Endothelial cell of umbilical vein (primary cell): ENCODE measurements at regions of chr17 and their contacts with region 1.

Region 1: DNA sequence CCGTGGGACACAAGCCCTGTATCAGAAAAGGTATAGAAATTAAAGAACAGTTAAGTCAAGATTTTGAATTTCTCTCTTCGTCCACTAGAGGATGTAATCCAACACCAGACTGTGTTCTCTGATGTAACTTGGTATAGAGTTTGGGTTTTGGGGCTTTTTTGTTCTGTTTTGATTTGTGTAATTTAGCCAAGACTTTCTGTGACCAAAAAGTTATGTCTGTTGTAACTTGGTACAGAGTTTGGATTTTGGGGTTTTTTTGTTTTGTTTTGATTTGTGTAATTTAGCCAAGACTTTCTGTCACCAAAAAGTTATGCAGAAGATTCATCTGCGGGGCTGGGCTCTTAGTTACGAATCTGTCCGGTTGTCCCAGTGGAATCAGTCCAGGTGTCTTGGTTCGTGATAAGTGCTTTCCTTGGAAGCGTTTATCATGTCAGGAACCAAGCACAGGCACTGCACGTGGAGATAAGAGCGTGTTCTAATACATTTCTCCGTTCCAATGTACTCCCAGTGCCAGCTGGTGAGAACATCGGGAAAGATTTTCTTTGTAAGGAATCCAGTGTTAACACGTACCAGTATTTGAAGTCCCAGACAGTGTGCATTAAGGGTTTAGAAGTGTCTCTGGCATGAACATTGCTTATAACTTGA is 44.1 kb upstream of the SEC14L1 start:
- DNase-seq: peak; percentile 78
- H3K4me3 ChIP-seq: no peak overlapping the region
- H3K27ac ChIP-seq: peak overlapping the region; percentile 86
- H3K4me1 ChIP-seq: peaks cover 50% of the 10 kb centered on the region
- H3K27me3 ChIP-seq: no peaks in the 10 kb centered on the region
- CTCF ChIP-seq: peak; percentile 47 to 58
- POLR2A ChIP-seq: peak; percentile 35

Region 2: DNA sequence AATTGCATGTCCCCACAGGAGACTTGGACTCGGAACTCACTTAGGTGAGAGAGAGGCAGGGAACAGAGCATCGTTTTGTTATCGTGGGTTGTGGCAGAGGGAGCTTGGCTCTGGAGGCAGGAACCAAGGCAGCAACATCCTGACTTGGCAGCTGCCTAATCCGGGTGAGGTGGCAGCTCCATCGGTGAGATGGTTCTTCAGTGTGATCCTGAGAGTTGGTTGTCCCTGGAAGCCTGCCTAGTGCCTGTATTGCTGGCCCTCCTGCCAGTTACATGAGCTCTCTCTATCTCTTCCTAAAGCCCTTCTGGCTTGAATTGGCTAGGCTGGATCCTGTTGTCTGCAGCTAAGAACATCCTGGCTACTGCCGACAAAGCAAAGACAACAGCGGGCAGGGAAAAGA is 24.2 kb after region 1 on chr17:
- CTCF ChIA-PET with region 1: interaction called, 15 read pairs
- POLR2A ChIA-PET with region 1: no interaction called
- dilution Hi-C with region 1: no loop called
- intact Hi-C with region 1: loop called (anchors 1 kb)
- DNase-seq: peak; percentile 57
- H3K4me3 ChIP-seq: no peak overlapping the region
- H3K27ac ChIP-seq: peak overlapping the region; percentile 98
- H3K4me1 ChIP-seq: peaks cover 72% of the 10 kb centered on the region
- H3K27me3 ChIP-seq: no peaks in the 10 kb centered on the region
- CTCF ChIP-seq: no peak
- POLR2A ChIP-seq: no peak

Region 3: DNA sequence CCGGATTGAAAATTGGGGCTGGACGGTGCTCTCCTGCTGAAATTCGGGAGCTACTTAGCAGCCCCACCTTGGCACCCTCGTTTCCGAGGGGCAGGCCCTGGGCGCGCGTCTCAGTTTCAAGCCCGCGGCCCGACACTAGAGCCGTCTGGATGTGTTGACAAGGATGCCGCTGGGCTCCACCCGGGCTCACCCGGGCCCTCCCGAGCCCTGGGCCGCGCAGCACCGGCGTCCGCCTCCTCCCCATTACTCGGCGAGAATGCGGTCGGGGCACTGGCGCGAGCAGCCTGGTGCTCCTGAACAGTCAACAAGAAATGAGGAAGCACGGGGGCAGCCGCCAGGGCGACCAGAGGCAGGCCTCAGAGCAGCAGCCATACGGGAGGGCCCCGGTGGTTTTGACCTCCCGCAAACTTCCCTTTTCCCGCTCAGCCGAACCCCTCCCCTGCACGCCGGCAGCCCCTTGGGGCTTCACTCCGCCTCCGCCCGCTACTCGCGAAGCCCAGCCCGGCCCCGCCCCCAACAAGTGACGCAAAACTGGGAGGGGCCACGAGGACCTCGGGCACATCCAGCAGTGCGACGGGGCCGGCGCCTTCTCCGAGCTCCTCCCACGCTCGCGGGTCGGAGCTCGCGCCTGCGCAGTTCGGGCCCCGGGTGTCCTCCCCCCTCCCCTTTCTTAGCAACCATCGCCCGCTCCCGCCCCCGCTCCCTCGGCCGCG is 43.6 kb after region 1 on chr17:
- CTCF ChIA-PET with region 1: interaction called, 20 read pairs
- POLR2A ChIA-PET with region 1: no interaction called
- dilution Hi-C with region 1: no loop called
- intact Hi-C with region 1: loop called (anchors 1 kb)
- DNase-seq: peak; percentile 99
- H3K4me3 ChIP-seq: peak overlapping the region in 2 of 3 experiments; percentile 12 to 19
- H3K27ac ChIP-seq: peak overlapping the region; percentile 94
- H3K4me1 ChIP-seq: peaks cover 46% of the 10 kb centered on the region
- H3K27me3 ChIP-seq: no peaks in the 10 kb centered on the region
- CTCF ChIP-seq: peak in 1 of 2 donors; percentile 8
- POLR2A ChIP-seq: peak; percentile 87